Ascending aorta (tissue), 2 donors: ENCODE measurements at regions of chr16 and their contacts with region 1.

Region 1: DNA sequence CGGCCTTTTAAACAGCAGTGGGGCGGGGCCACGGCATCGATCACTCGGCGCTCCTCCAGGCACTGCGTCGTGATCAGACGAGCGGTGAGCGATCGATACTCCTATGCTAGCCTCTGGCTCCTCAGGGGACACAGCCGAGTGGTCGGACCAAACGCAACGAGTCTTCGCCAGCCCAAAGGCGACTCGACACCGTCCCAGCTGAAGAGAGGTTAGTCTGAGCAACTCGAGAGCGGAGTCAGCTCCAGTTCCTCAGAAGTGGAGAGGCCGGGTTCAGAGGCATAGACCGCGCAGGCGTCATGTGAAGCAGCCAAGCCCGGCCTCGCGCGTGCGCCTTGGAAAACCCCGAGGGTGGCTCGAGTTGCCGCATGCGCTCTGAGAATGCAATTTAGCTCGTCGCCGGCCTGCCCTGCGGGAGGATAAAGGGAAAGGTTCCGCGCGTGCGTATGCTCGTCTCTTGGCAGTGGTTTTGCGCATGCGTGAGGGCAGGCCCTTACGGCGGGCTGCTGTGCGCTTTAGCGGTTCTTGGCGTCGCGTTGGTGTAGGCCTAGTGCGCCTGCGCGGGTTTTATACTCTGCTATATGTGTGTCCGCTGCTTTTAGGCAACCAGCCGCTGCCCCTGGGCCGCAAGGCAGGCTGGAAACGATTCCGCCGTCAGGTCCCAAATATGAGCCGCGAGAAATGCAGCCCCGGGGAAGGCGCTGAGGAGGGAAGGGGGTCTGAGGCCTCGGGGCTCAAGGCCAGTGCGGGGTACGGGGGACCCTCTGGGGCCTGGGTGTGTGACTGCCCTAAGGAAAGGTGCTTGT is at the start of gene KDM8:
- DNase-seq: peak; percentile 97 to 100
- H3K4me3 ChIP-seq: peak within 1 kb of the TSS; percentile 62 to 88
- H3K27ac ChIP-seq: peak within 1 kb of the TSS; percentile 95 to 99
- H3K4me1 ChIP-seq: peaks cover 5 to 11% of the 10 kb centered on the region in 2 donors
- H3K27me3 ChIP-seq: no peaks in the 10 kb centered on the region
- CTCF ChIP-seq: no peak
- total RNA-seq, gene KDM8: 55.5 TPM

Region 2: GRCh38 chr16:27242868-27243590 is 39.4 kb after region 1 on chr16:
- intact Hi-C with region 1: loop called (anchors 2 kb)
- DNase-seq: peak; percentile 26 to 85
- H3K4me3 ChIP-seq: peak overlapping the region; percentile 40 to 51
- H3K27ac ChIP-seq: peak overlapping the region; percentile 73 to 90
- H3K4me1 ChIP-seq: peaks cover 21 to 52% of the 10 kb centered on the region in 2 donors
- H3K27me3 ChIP-seq: no peaks in the 10 kb centered on the region
- CTCF ChIP-seq: peak in 1 of 3 experiments; percentile 9

Region 3: GRCh38 chr16:27330542-27330941 is 126.9 kb after region 1 on chr16:
- intact Hi-C with region 1: no loop called
- DNase-seq: peak in 1 of 2 donors; percentile 91
- H3K4me3 ChIP-seq: no peak overlapping the region
- H3K27ac ChIP-seq: peak overlapping the region; percentile 91
- H3K4me1 ChIP-seq: peaks cover 15 to 21% of the 10 kb centered on the region in 2 donors
- H3K27me3 ChIP-seq: no peaks in the 10 kb centered on the region
- CTCF ChIP-seq: no peak

Region 4: DNA sequence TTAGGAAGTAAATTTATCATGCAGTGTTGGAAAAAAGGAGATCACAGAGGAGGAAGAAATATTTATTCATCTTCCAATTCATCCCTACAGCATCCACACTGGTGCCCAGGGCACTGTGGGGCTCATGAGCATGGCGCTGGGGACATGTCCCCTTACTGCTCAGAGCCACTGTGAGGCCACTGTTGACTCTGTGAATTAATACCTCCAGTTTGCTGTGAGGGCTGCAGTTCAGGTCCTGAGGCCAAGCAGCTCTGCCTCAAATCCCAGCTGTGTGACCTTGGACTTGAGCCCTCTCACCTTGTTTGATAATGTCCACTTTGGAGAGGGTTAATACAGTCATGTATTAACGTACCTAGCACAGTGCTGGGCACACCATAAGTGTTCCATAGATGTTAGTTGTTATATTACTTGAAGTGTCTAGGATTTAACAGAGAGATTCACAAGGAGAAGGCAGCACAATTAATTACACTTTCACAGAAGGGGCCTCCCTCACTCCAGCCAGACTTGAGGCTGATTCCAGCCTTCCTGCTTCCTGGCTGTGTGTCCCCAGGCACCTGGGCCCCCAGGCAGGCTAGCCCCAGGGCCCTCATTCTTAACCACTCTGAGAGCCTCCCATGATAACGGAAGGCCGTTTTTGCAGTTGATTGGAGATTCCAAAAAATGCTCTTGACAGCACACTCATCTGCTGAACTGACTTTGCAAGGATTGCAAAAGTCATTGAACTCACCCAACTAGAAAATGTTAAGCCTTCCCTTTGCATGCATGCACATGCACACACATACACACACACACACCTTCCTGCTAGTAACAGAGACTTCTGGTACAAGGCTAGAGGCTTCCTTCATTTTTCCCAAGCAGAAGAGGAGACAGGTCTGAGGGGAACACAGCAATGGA is 375.7 kb after region 1 on chr16:
- intact Hi-C with region 1: loop called (anchors 5 kb)
- DNase-seq: no peak
- H3K4me3 ChIP-seq: no peak overlapping the region
- H3K27ac ChIP-seq: peak overlapping the region; percentile 61 to 69
- H3K4me1 ChIP-seq: peaks cover 0 to 7% of the 10 kb centered on the region in 2 donors
- H3K27me3 ChIP-seq: no peaks in the 10 kb centered on the region
- CTCF ChIP-seq: no peak

Region 5: GRCh38 chr16:28553776-28554633 is 1350.4 kb after region 1 on chr16 and contains the start of gene SGF29:
- intact Hi-C with region 1: loop called (anchors 10 kb)
- DNase-seq: peak; percentile 53 to 95
- H3K4me3 ChIP-seq: peak within 1 kb of the TSS; percentile 61 to 62
- H3K27ac ChIP-seq: peak within 1 kb of the TSS; percentile 87 to 96
- H3K4me1 ChIP-seq: peaks cover 0 to 7% of the 10 kb centered on the region in 2 donors
- H3K27me3 ChIP-seq: no peaks in the 10 kb centered on the region
- CTCF ChIP-seq: peak in 2 of 3 experiments; percentile 32 to 35
- total RNA-seq, gene SGF29: 14.0 TPM